Sciatic nerve (tissue), 2 donors: ENCODE measurements at regions of chr2 and their contacts with region 1.

Region 1: GRCh38 chr2:61862085-61862484 is 8.2 kb upstream of the FAM161A start:
- DNase-seq: no peak
- ATAC-seq: no peak

Region 2: GRCh38 chr2:61885896-61886603 is 24.0 kb after region 1 on chr2:
- intact Hi-C with region 1: loop called (anchors 2 kb)
- DNase-seq: no peak
- ATAC-seq: no peak

Region 3: DNA sequence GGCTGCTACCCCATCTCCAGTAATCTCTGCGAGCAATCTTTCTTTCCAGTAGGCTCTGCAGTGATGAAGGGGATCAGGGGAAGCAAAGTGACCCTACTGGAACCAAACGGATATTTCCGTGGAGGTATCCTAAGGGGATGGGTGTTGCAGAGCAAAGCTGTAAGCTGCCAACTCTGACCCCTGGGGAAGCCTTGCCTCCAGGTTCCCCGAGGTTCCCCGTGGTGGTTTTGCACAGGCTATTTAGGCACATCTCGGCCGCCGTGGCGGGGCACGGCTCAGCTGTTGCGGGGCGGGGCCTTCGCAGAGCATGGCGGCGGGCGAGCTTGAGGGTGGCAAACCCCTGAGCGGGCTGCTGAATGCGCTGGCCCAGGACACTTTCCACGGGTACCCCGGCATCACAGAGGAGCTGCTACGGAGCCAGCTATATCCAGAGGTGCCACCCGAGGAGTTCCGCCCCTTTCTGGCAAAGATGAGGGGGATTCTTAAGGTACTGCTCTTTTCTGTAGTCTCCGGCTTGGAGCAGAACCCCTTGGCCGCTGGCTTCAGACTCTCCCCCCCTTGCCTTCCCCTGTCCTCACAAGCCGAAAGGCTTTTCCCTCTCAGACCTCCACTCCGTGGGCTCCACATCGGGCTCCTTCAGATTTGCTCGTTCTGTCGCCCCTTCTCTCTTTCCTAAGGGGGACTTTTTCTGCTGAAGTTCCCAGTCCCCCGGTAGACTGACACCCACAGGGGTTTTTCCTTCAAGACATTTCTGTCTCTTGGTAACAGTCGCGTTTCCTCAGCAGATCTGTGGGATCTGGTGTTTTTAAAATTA is 43.5 kb after region 1 on chr2 and contains the start of gene COMMD1:
- intact Hi-C with region 1: no loop called
- DNase-seq: peak; percentile 88
- ATAC-seq: peak; percentile 97
- total RNA-seq, gene COMMD1: 30.1 TPM

Region 4: DNA sequence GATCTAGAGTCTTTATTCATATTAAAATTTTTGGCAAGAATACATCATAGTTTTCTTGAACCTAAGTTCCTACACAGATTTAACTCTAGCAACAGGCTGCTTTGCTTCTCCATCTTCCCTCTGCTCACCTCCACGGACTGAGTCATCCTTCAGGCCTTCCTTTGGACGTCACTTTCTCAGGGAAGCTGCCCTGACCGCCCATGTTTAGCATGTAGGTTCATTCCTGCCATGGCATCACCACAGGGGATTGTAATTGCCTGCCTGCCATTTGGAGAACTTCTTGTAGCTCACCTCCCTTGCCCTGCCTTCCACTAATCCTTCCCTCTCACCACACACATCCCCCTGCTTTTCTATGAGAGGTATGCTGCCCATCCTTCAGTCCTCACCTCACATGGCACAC is 289.9 kb after region 1 on chr2:
- intact Hi-C with region 1: no loop called
- DNase-seq: no peak
- ATAC-seq: no peak